ENCODE measurements at regions of chr19 and their contacts with region 1.

Region 1: GRCh38 chr19:6021878-6022569 is 44.1 kb upstream of the RANBP3 start:
- DNase-seq: peak; percentile 71 to 87 (median 80)
- ATAC-seq: peak; percentile 80 to 92 (median 88)
- H3K4me3 ChIP-seq: no peak overlapping the region
- H3K27ac ChIP-seq: no peak overlapping the region
- H3K4me1 ChIP-seq: peaks cover 0 to 12% (median 5%) of the 10 kb centered on the region in 3 donors
- H3K27me3 ChIP-seq: no peaks in the 10 kb centered on the region
- CTCF ChIP-seq: peak; percentile 66 to 82 (median 77)

Region 2: GRCh38 chr19:5775668-5776309 is 246.2 kb before region 1 on chr19:
- intact Hi-C with region 1: loop called in 1 of 3 experiments (anchors 10 kb)
- DNase-seq: no peak
- ATAC-seq: peak in 3 of 4 donors; percentile 27 to 50 (median 34)
- H3K4me3 ChIP-seq: no peak overlapping the region
- H3K27ac ChIP-seq: no peak overlapping the region
- H3K4me1 ChIP-seq: no peaks in the 10 kb centered on the region
- H3K27me3 ChIP-seq: no peaks in the 10 kb centered on the region
- CTCF ChIP-seq: no peak

Region 3: DNA sequence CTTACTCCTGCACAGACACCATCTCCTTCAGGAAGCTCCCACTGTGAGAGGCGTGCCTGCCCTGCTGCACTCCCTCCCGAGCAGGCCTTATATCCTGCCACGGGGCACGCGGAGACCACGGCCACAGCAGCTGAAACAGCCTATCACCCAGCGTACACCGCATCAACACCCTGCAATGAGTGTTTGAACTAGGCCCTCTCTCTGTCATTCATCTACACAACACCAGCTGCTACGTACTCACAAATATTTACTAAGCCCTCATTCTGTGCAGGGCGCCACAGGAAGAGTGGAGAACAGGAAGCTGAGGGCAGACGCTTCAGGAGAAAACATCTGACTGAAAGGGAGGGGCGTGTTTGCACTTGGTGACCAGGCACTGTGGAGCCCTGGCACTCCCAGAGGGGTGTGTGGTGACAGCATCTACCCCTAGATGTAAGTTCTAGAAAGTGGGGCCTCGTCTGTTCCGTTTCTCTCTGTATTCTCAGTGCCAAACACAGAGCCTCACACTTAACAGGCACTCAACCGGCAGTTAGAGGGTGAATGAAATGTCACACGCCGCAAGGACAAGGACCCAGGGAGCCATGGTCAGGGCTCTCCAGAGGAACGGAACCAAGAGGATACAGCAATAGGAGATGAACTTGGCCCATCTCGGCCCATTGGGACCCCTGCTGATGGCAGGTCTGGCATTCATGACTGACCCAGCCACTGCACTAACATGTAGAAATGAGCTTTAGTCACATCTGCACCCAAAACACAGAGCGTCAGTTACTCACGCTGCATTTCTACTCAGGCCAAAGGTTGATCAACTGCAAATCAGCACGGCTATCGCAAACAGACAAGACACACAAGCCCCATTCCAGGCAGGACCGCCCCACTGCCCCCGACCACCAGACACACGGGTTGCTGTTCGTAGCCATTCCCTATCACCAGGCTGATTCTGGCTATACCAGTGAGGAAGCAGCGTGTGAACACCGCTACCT is 59.8 kb before region 1 on chr19:
- intact Hi-C with region 1: no loop called
- DNase-seq: peak in 5 of 6 donors; percentile 73 to 87 (median 81)
- ATAC-seq: peak; percentile 81 to 85 (median 82)
- H3K4me3 ChIP-seq: peak overlapping the region in 1 of 4 donors; percentile 9
- H3K27ac ChIP-seq: peak overlapping the region; percentile 66 to 88 (median 78)
- H3K4me1 ChIP-seq: peaks cover 57 to 66% (median 61%) of the 10 kb centered on the region in 3 donors
- H3K27me3 ChIP-seq: no peaks in the 10 kb centered on the region
- CTCF ChIP-seq: no peak

Region 4: GRCh38 chr19:5987077-5987818 is 34.8 kb before region 1 on chr19:
- intact Hi-C with region 1: loop called in 1 of 3 experiments (anchors 5 kb)
- DNase-seq: peak; percentile 82 to 91 (median 86)
- ATAC-seq: peak; percentile 86 to 96 (median 90)
- H3K4me3 ChIP-seq: peak overlapping the region in 1 of 4 donors; percentile 27
- H3K27ac ChIP-seq: peak overlapping the region in 1 of 4 donors; percentile 23
- H3K4me1 ChIP-seq: peaks cover 0 to 7% (median 0%) of the 10 kb centered on the region in 3 donors
- H3K27me3 ChIP-seq: no peaks in the 10 kb centered on the region
- CTCF ChIP-seq: peak; percentile 90 to 96 (median 94)

Region 5: GRCh38 chr19:6076675-6077463 is 54.8 kb after region 1 on chr19:
- intact Hi-C with region 1: no loop called
- DNase-seq: no peak
- ATAC-seq: peak in 1 of 4 donors; percentile 23
- H3K4me3 ChIP-seq: no peak overlapping the region
- H3K27ac ChIP-seq: no peak overlapping the region
- H3K4me1 ChIP-seq: no peaks in the 10 kb centered on the region
- H3K27me3 ChIP-seq: no peaks in the 10 kb centered on the region
- CTCF ChIP-seq: no peak

Region 6: GRCh38 chr19:6212403-6213265 is 190.6 kb after region 1 on chr19:
- intact Hi-C with region 1: no loop called
- DNase-seq: peak in 2 of 6 donors; percentile 50 to 74
- ATAC-seq: no peak
- H3K4me3 ChIP-seq: no peak overlapping the region
- H3K27ac ChIP-seq: no peak overlapping the region
- H3K4me1 ChIP-seq: no peaks in the 10 kb centered on the region
- H3K27me3 ChIP-seq: no peaks in the 10 kb centered on the region
- CTCF ChIP-seq: no peak

Region 7: GRCh38 chr19:6297202-6297601 is 275.2 kb after region 1 on chr19:
- intact Hi-C with region 1: no loop called
- DNase-seq: no peak
- ATAC-seq: no peak
- H3K4me3 ChIP-seq: no peak overlapping the region
- H3K27ac ChIP-seq: no peak overlapping the region
- H3K4me1 ChIP-seq: no peaks in the 10 kb centered on the region
- H3K27me3 ChIP-seq: no peaks in the 10 kb centered on the region
- CTCF ChIP-seq: no peak